ENCODE measurements at regions of chr2 and their contacts with region 1.

Region 1: DNA sequence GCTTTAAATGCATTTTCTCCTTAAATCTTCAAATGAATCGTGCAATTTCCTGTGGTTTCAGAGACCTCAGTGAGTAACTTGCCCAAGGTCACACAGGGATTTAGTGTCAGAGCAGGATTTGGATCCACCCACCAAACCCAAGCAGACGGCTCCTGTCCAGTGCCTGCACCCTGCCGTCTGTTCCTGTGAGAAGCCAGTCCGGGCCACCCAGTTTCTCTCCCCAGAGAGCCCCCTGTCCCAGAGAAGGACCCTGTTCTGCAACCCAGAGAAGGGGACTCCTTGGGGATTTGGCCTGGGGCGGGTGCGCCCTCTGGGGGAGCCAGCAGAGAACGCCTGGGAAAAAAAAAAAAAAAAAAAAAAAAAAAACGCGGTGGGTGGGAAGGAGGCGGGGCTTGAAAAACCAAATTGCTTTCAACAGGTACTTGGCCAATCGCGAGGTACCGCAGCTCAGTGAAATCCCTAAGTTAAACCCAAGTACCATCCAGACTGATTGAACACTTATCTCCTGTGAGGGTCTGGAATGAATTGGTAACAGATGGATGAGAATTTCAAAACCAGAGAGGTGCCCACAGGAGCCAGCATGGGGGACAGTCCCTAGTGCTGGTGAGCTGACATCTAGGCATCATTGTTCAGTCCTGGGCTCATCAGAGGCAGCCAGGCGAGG is 30.9 kb upstream of the REEP1 start:
- H3K4me3 ChIP-seq: no peak overlapping the region; the same call in 1 of the 2 replicates
- H3K27ac ChIP-seq: no peak overlapping the region
- H3K4me1 ChIP-seq: no peaks in the 10 kb centered on the region
- CTCF ChIP-seq: peak; percentile 68

Region 2: DNA sequence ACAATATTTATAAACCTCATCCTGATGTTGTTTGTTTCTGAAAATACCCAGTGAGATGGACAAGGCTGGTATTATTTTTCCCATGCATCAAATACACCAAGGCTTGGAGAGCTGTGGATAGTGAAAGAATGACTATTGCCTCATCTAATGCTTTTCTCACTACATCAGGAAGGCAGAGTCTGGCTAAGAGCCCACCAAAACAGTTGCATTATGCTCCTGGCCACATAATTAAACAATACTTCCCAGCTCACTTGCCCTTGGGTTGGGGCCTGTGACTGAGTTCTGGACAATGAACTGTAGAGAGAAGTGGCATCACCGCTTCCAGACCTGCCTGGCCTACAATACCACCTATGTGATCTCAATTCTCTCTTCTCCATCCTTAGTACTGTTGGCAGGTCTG is 15.6 kb after region 1 on chr2:
- CTCF ChIA-PET with region 1: interaction called, 23 read pairs
- POLR2A ChIA-PET with region 1: no interaction called
- H3K4me3 ChIP-seq: no peak overlapping the region
- H3K27ac ChIP-seq: no peak overlapping the region
- H3K4me1 ChIP-seq: no peaks in the 10 kb centered on the region
- CTCF ChIP-seq: no peak

Measured in HEK293 (cell line).